H1 (cell line): ENCODE measurements at regions of chr10 and their contacts with region 1.

Region 1: DNA sequence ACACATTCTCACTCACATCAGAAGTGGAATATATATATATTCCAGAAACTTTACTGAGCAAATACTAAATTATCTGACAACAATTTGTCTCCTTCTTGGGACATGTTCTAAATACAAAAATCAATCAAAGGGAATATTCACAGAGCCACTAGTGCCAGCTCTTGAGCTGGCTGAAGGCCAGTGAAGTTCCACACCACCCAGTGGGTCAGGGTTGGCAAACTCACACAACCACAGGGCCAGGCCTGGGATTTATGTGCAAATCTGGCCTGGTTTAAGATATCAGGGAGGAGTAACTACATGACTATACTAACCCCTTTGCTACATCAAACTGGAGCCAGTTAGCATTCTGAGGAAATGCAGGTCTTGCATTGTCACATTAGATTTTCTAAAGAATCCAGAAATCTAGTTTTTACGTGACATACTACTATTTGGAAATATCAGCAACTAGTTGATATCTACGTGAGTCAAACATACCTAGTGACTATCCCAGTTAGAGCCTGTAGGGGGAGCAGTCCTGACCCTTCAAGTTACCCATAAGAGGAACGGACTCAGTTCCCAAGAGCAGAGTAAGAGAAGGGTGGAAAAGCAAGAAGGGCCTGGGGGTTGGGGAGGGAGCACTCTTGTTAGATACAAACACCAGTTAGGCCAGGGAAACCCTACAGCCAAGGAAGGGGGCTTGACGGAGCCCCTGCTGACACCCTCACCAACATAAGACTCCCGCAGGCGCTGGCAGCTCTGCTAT is 600.4 kb downstream of the KCNMA1 start:
- DNase-seq: peak; percentile 34 to 65
- H3K4me3 ChIP-seq: 0 out of 8 replicates have a peak overlapping the region, but pooled peaks of 1 of the 4 experiments have one; percentile 3
- H3K27ac ChIP-seq: no peak overlapping the region
- H3K4me1 ChIP-seq: peaks cover 0 to 4% (median 2%) of the 10 kb centered on the region in 4 experiments; a peak in 4 of 7 replicates
- H3K27me3 ChIP-seq: no peaks in the 10 kb centered on the region; a peak in 2 of 7 replicates
- CTCF ChIP-seq: peak; percentile 15 to 76 (median 64)
- EP300 ChIP-seq: no peak
- POLR2A ChIP-seq: no peak
- RAD21 ChIP-seq: peak; percentile 14 to 48; a peak in 2 of 4 replicates

Region 2: GRCh38 chr10:77021966-77022490 is 15.1 kb before region 1 on chr10:
- CTCF ChIA-PET with region 1: interaction called, 48 read pairs
- POLR2A ChIA-PET with region 1: no interaction called
- DNase-seq: no peak
- H3K4me3 ChIP-seq: no peak overlapping the region
- H3K27ac ChIP-seq: no peak overlapping the region
- H3K4me1 ChIP-seq: no peaks in the 10 kb centered on the region; a peak in 1 of 7 replicates
- H3K27me3 ChIP-seq: no peaks in the 10 kb centered on the region
- CTCF ChIP-seq: no peak
- EP300 ChIP-seq: no peak
- POLR2A ChIP-seq: no peak
- RAD21 ChIP-seq: no peak

Region 3: DNA sequence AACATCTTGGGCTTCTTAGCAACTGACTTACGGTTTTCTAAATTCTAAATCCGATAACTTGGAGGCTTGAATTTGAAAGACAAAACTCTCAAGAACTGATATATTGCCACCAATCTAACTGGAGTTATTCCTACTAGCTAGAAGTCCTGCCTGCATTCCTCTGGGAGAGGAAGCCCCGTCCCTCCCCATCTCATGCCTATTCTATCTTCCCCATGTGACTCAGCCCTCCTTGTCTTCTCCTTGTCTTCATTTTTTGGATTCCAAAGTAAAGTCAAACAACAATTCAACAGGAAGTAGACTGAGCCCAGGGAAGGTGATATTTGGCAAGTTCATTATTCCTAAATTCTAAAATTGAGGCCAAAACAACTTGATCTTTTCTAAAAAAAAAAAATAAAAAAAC is 12.7 kb after region 1 on chr10:
- CTCF ChIA-PET with region 1: interaction called, 16 read pairs
- POLR2A ChIA-PET with region 1: no interaction called
- DNase-seq: peak in 1 of 2 experiments; percentile 11
- H3K4me3 ChIP-seq: no peak overlapping the region
- H3K27ac ChIP-seq: no peak overlapping the region
- H3K4me1 ChIP-seq: peaks cover 0 to 4% (median 2%) of the 10 kb centered on the region in 4 experiments; a peak in 3 of 7 replicates
- H3K27me3 ChIP-seq: peaks cover 0 to 1% (median 0%) of the 10 kb centered on the region in 4 experiments; a peak in 1 of 7 replicates
- CTCF ChIP-seq: no peak
- EP300 ChIP-seq: no peak
- POLR2A ChIP-seq: no peak
- RAD21 ChIP-seq: no peak